ENCODE measurements at regions of chr12 and their contacts with region 1.

Region 1: DNA sequence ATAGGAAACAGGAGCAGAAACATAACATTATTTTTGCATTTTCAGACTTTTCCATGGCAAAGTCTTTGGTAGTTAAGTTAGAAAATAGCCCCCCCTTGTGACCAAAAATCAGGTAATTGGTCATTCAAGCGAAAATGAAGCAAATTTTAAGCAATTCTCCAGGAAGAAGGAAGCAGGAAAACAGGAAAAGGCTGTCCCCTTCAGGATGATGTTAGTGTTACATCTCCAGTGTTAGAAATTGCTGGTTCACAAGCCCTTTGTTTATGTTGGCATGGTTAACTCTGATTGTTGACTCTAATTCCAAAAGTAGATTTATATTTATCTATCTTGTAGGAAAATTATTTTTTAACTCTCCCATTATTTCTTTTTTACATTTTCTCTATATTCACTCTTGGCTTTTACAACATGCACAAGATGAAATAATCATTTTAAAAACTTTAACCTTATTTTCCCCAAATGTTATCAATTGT is 18.8 kb upstream of the GAS2L3 start:
- DNase-seq: peak in 2 of 5 donors; percentile 37 to 43
- ATAC-seq: peak; percentile 50 to 86 (median 70)
- H3K4me3 ChIP-seq: no peak overlapping the region
- H3K27ac ChIP-seq: peak overlapping the region in 2 of 12 donors; percentile 9 to 24
- H3K4me1 ChIP-seq: peaks cover 0 to 10% (median 5%) of the 10 kb centered on the region in 12 donors
- H3K27me3 ChIP-seq: no peaks in the 10 kb centered on the region
- CTCF ChIP-seq: peak; percentile 67 to 90 (median 78)
- POLR2A ChIP-seq: no peak

Region 2: GRCh38 chr12:100154474-100155247 is 400.0 kb before region 1 on chr12:
- intact Hi-C with region 1: loop called in 1 of 10 experiments (anchors 10 kb)
- DNase-seq: peak; percentile 61 to 90 (median 79)
- ATAC-seq: peak; percentile 26 to 70 (median 60)
- H3K4me3 ChIP-seq: no peak overlapping the region
- H3K27ac ChIP-seq: no peak overlapping the region
- H3K4me1 ChIP-seq: peaks cover 0 to 3% (median 0%) of the 10 kb centered on the region in 12 donors
- H3K27me3 ChIP-seq: no peaks in the 10 kb centered on the region
- CTCF ChIP-seq: peak; percentile 68 to 90 (median 78)
- POLR2A ChIP-seq: no peak

Region 3: DNA sequence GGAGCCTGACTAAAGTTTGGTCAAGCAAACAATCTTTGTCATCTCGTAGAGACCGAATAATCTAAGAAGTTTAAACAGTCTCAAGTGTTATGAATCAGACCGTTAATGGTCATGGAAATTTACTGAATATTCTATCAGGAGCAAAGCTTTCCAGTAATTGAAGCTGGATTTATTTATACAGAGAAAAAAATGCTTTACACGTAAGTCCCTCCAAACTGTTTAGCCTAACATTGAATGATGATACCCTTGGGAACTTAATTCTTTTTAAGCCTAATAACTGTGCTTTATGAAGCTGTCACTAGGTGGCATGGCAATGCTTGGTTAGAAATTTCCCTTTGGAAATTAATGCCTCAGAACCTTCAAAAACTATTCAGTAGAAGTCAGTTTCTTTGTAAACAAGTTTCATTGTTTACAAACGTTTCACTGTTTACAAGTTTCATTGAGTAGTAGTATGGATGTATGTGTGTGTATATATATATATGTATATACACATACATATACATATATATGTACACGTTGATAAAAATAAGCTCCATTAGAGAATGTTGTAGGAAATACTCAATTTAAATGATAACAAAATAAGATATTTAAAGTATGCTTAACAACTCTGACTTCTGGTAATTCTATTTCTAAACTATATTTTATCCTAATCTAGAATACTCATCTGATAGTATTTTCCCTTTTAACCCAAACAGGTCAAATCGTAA is 319.9 kb before region 1 on chr12:
- intact Hi-C with region 1: loop called in 8 of 10 experiments (anchors 2 to 10 kb)
- DNase-seq: no peak
- ATAC-seq: peak in 2 of 4 donors; percentile 48 to 76
- H3K4me3 ChIP-seq: peak overlapping the region in 1 of 12 donors; percentile 13
- H3K27ac ChIP-seq: peak overlapping the region in 4 of 12 donors; percentile 0 to 28 (median 15)
- H3K4me1 ChIP-seq: peaks cover 0 to 7% (median 0%) of the 10 kb centered on the region in 12 donors
- H3K27me3 ChIP-seq: no peaks in the 10 kb centered on the region
- CTCF ChIP-seq: peak; percentile 53 to 84 (median 72)
- POLR2A ChIP-seq: no peak

Region 4: GRCh38 chr12:100311317-100311716 is 243.3 kb before region 1 on chr12:
- intact Hi-C with region 1: no loop called
- DNase-seq: no peak
- ATAC-seq: no peak
- H3K4me3 ChIP-seq: no peak overlapping the region
- H3K27ac ChIP-seq: peak overlapping the region in 4 of 12 donors; percentile 7 to 33 (median 22)
- H3K4me1 ChIP-seq: peaks cover 0 to 8% (median 0%) of the 10 kb centered on the region in 12 donors
- H3K27me3 ChIP-seq: no peaks in the 10 kb centered on the region
- CTCF ChIP-seq: no peak
- POLR2A ChIP-seq: no peak

Region 5: DNA sequence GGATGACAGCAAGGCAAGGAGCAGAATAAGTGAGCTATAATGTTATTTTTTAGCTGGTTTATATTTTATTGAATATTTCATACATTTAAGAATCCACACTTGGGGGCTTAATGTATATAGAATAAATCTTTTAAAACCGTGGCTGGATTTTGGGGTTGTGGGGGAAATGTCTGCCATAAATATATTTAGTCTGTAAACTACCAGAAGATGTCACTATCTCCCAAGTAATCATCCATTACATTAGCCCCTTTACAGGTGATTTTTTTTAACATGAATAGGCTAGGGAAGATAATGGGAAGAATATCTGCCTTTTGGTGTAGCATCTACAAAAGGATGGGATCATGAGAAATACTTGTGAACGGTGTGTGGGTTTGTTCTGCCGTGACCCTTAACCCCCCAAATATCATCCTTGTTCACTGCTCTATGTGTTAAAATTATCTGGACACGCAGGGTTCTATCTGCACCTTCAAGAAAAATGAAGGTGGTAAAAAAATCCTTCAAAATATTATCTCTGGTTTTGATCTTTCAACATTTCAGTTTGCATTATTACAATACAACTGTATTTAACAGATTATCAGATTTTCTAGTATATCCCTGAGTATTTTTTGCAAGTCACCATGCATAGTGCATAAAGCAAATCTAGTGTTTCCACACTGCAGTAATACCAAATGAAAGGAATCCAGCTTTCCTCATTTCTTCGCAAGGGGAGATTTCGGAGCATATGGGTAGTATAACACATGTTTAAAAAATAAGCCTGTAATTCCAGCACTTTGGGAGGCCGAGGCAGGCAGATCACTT is 205.8 kb before region 1 on chr12:
- intact Hi-C with region 1: loop called (anchors 1 to 10 kb)
- DNase-seq: no peak
- ATAC-seq: no peak
- H3K4me3 ChIP-seq: no peak overlapping the region
- H3K27ac ChIP-seq: no peak overlapping the region
- H3K4me1 ChIP-seq: no peaks in the 10 kb centered on the region
- H3K27me3 ChIP-seq: no peaks in the 10 kb centered on the region
- CTCF ChIP-seq: peak in 11 of 12 donors; percentile 27 to 65 (median 47)
- POLR2A ChIP-seq: no peak

Region 6: GRCh38 chr12:100356644-100357223 is 197.9 kb before region 1 on chr12 and contains the start of gene SLC17A8:
- intact Hi-C with region 1: loop called in 3 of 10 experiments (anchors 2 to 5 kb)
- DNase-seq: no peak
- ATAC-seq: no peak
- H3K4me3 ChIP-seq: no peak within 1 kb of the TSS
- H3K27ac ChIP-seq: no peak within 1 kb of the TSS
- H3K4me1 ChIP-seq: peaks cover 0 to 10% (median 2%) of the 10 kb centered on the region in 12 donors
- H3K27me3 ChIP-seq: peaks cover 0 to 20% (median 5%) of the 10 kb centered on the region in 9 donors
- CTCF ChIP-seq: no peak
- POLR2A ChIP-seq: no peak
- total RNA-seq, gene SLC17A8: 0.15 TPM in 1 of 9 donors, not detected in the others

Region 7: GRCh38 chr12:100391856-100392255 is 162.8 kb before region 1 on chr12:
- intact Hi-C with region 1: loop called in 1 of 10 experiments (anchors 5 kb)
- DNase-seq: no peak
- ATAC-seq: no peak
- H3K4me3 ChIP-seq: no peak overlapping the region
- H3K27ac ChIP-seq: no peak overlapping the region
- H3K4me1 ChIP-seq: no peaks in the 10 kb centered on the region
- H3K27me3 ChIP-seq: no peaks in the 10 kb centered on the region
- CTCF ChIP-seq: peak in 7 of 12 donors; percentile 10 to 39 (median 22)
- POLR2A ChIP-seq: no peak

Region 8: DNA sequence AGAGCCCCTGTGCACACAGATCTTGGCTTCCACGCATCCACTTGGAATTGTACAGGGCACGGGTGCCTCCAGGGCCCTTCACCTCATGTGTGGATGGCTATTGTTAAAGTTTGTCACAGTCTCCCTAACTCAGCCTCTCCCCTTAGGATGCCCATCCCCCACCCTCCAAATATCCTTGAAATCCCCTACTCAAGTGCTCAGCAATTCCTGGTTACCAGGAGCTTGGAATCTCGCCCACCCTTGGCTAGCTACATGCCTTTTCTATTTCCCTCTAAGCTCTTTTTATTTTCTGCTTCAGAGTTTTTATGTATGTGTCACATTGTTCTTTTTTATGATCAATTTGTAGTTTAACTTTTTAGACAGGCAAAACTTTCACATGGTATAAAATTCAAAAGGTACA is 93.9 kb before region 1 on chr12:
- intact Hi-C with region 1: no loop called
- DNase-seq: no peak
- ATAC-seq: no peak
- H3K4me3 ChIP-seq: no peak overlapping the region
- H3K27ac ChIP-seq: no peak overlapping the region
- H3K4me1 ChIP-seq: no peaks in the 10 kb centered on the region
- H3K27me3 ChIP-seq: peaks cover 0 to 3% (median 0%) of the 10 kb centered on the region in 9 donors
- CTCF ChIP-seq: no peak
- POLR2A ChIP-seq: no peak

Region 9: DNA sequence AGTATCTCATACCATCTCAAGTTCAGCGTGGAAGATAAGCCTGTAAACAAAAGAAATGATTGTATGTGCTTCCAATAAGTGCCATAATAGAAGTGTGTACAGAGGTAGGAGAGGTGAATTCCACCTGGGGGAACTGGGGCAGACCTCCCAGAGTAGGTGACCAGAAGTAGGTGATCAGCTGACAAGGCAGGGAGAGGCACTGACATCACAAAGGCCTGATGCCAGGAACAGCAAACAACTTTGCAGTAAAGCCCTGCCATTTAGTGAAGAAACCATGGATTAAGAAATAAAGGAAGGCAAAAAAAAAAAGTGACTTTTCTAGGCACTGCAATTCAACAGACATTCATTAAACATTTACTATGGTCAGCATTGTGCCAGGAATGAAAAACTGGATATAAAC is 49.8 kb before region 1 on chr12:
- intact Hi-C with region 1: no loop called
- DNase-seq: no peak
- ATAC-seq: no peak
- H3K4me3 ChIP-seq: no peak overlapping the region
- H3K27ac ChIP-seq: no peak overlapping the region
- H3K4me1 ChIP-seq: no peaks in the 10 kb centered on the region
- H3K27me3 ChIP-seq: no peaks in the 10 kb centered on the region
- CTCF ChIP-seq: no peak
- POLR2A ChIP-seq: no peak